ENCODE measurements at regions of chr1 and their contacts with region 1.

Region 1: DNA sequence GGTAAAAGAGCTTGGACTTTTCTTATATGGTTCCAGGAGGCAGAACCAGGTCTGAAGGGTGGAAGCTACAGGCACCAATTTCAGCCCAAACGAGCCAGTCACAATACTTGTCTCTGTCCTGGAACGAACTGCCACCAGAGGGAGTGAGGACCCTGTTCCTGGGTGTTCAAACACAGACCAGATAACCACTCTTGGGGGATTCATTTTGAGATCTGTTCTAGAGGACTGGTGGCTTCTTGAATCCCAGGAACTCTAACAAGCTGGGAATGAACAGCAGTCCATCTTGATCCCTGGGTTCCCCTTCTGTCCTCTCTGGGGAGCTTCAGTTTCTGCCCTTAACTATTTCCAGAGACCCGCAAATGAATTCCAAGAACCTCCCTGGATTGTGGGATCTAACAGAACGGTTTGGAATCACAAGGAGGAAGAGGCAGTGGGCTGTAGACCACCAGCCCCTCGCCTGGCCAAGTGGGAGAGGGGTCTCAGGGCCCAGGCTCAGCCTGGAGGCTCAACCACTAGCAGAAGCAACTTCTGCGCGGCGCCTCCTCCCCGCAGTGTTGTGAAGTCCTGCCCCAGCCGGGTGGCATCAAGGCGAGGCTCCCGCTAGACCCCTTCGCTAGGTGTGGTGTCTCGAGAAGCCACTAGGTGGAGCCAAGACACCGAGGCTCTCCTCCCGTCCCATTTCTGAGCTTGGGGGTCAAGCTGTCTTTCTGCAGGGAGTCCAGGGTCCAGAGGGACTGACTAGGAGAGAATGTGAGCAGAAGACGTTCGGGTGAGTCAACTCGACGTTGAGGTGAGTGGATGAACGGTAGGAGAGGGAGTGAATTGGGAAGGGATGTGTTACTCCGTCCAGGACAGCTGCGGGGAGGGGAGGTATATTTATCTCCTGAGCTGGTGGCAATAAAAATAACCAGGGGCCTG is 12.1 kb upstream of the NES start:
- DNase-seq: peak; percentile 92
- H3K4me3 Mint-ChIP-seq: no peak overlapping the region
- H3K27ac Mint-ChIP-seq: no peak overlapping the region
- H3K4me1 Mint-ChIP-seq: peaks cover 32% of the 10 kb centered on the region
- H3K27me3 Mint-ChIP-seq: peaks cover 37% of the 10 kb centered on the region
- CTCF ChIP-seq: peak; percentile 97

Region 2: GRCh38 chr1:156652131-156652991 is 36.9 kb before region 1 on chr1:
- CTCF ChIA-PET with region 1: interaction called, 552 read pairs
- POLR2A ChIA-PET with region 1: interaction called, 6 read pairs
- intact Hi-C with region 1: no loop called
- DNase-seq: peak; percentile 66
- H3K4me3 Mint-ChIP-seq: no peak overlapping the region
- H3K27ac Mint-ChIP-seq: no peak overlapping the region
- H3K4me1 Mint-ChIP-seq: peaks cover 3% of the 10 kb centered on the region
- H3K27me3 Mint-ChIP-seq: no peaks in the 10 kb centered on the region
- CTCF ChIP-seq: no peak

Region 3: DNA sequence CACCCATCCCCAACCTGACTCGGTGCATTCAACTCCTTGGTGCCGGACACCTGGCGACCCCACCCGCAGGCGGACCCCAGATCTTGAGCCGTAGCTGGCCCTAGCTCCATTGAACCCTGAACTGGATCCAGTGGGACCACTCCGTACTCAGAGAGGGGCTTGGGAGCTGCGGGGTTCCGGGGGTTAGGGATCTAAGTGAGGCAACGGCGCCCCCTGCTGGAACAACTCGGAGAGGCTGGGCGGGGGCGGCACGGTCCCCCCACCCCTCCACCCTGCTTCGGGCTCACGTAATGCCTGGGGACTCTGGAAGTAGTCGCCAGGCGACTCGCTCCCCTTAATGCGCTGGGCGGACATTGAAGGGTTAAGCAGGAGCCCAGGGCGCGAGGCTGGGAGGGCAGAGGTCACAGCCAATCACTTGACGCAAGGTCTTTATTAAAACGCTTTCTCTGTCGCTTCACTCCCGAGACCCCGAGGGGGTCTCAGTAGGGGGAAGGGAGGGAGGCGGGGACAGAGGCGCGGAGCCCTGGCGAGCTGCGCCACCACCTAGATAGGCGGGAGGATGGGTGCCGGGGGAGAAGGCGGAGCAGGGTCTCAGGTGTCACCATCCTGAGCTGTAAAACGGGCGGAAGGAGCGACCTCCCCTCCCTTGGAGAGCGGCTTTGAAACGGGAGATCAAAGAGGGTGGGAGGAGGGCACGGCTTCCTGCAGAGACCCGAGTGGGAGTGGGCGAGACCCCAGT is 16.8 kb after region 1 on chr1:
- CTCF ChIA-PET with region 1: interaction called, 2,415 read pairs
- POLR2A ChIA-PET with region 1: interaction called, 63 read pairs
- intact Hi-C with region 1: loop called (anchors 1 kb)
- DNase-seq: peak; percentile 57
- H3K4me3 Mint-ChIP-seq: peak overlapping the region; percentile 30
- H3K27ac Mint-ChIP-seq: no peak overlapping the region
- H3K4me1 Mint-ChIP-seq: peaks cover 38% of the 10 kb centered on the region
- H3K27me3 Mint-ChIP-seq: no peaks in the 10 kb centered on the region
- CTCF ChIP-seq: peak; percentile 99

Region 4: DNA sequence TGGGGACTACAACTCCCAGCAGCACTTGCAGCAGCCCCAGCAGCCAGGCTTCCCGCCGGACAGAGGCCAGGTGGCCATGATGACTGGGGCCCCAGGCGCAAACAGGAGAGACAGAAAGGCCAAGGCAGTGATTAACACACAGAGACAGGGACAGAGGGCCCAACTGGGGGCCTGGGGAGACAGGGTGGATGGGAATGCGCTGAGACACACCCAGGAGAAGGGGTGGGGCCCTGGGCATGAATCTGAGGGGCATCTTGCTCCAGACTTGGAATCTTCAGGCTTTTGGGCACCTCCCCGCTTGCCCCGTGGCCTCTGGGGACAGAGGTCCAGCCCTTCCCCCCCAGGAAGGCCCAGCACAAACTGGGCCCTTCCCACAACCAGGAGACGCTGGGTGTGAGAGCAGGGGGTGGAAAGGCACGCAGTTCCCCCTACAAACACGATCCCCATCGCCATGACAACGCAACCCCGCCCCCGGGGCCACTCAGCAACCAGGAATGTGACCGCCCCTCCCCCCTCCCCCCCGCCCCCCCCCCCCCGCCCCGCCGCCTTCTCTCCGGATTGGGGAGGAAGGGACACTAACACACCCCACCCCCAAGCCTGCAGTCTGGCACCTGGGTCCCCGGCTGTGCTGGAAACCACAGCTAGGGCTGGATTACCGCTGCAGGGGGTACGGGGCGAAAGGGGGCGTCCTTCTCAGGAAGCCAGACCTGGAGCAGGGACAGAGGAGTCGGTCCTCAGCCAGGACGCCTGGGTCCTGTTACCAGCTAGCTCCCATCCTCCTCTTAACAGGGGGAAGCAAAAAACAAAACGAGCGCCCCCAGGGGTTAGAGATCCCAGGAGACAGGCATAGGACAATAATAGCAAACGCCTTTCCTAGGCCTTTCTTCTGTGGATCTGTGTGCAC is 57.7 kb after region 1 on chr1:
- CTCF ChIA-PET with region 1: interaction called, 23 read pairs
- POLR2A ChIA-PET with region 1: interaction called, 9 read pairs
- intact Hi-C with region 1: no loop called
- DNase-seq: peak; percentile 93
- H3K4me3 Mint-ChIP-seq: peak overlapping the region; percentile 79
- H3K27ac Mint-ChIP-seq: peak overlapping the region; percentile 99
- H3K4me1 Mint-ChIP-seq: peaks cover 60% of the 10 kb centered on the region
- H3K27me3 Mint-ChIP-seq: no peaks in the 10 kb centered on the region
- CTCF ChIP-seq: no peak

Region 5: DNA sequence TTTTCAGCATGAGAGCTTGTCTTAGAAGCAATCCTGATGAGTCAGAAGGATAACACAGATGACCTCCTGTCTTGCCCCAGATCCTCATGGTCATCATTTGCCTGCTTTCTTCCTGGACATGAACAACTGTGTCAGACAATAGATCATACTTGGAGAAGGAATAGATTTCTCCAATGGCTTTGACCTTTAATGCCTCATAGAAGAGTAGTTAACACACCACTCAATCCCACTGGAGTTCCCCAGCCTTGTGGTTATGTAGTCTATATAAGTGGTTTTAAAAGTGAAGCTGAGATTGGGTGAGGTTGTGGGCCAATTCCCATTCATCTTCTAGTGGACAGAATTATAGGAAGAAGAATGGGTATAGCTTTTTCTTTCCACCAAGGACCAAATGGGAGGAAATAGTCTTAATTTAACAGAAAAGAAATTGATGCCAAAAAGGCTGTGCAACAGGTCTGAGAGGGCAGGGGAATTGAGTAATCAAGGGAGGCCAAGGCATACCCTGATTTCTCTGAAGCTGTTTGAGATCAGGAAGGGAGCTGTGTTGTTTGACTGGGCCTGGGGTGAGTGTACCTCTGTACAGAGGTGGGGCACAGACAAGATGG is 92.4 kb after region 1 on chr1:
- CTCF ChIA-PET with region 1: interaction called, 22 read pairs
- POLR2A ChIA-PET with region 1: no interaction called
- intact Hi-C with region 1: no loop called
- DNase-seq: no peak
- H3K4me3 Mint-ChIP-seq: no peak overlapping the region
- H3K27ac Mint-ChIP-seq: peak overlapping the region; percentile 66
- H3K4me1 Mint-ChIP-seq: peaks cover 28% of the 10 kb centered on the region
- H3K27me3 Mint-ChIP-seq: no peaks in the 10 kb centered on the region
- CTCF ChIP-seq: no peak